ENCODE measurements at regions of chr11 and their contacts with region 1.

Region 1: GRCh38 chr11:115279813-115280761 is 224.1 kb downstream of the CADM1 start:
- DNase-seq: peak; percentile 63
- H3K4me3 ChIP-seq: no peak overlapping the region
- H3K27ac ChIP-seq: peak overlapping the region; percentile 79
- H3K27me3 ChIP-seq: no peaks in the 10 kb centered on the region
- CTCF ChIP-seq: no peak

Region 2: DNA sequence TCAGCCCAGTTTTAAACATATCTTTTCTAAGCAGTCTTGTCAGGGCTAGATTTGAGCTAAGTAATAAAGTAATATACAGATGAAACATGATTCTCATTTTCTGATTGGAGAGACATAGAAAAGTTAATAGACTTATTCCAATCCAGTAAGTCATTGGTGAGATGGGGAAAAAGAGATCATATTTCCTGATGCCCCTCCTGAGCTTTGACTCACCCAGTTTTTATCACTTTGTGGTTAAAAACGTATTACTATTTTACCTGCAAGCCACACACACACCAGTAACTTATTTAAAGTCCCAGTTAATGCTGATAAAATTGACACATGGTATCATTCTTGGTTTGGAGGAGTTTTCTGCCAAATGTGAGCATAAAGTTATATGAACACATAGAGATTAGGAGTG is 82.7 kb before region 1 on chr11:
- CTCF ChIA-PET with region 1: no interaction called
- POLR2A ChIA-PET with region 1: interaction called, 11 read pairs
- DNase-seq: no peak
- H3K4me3 ChIP-seq: no peak overlapping the region
- H3K27ac ChIP-seq: no peak overlapping the region
- H3K27me3 ChIP-seq: no peaks in the 10 kb centered on the region
- CTCF ChIP-seq: no peak